Panc1 (cell line): ENCODE measurements at regions of chr2 and their contacts with region 1.

Region 1: DNA sequence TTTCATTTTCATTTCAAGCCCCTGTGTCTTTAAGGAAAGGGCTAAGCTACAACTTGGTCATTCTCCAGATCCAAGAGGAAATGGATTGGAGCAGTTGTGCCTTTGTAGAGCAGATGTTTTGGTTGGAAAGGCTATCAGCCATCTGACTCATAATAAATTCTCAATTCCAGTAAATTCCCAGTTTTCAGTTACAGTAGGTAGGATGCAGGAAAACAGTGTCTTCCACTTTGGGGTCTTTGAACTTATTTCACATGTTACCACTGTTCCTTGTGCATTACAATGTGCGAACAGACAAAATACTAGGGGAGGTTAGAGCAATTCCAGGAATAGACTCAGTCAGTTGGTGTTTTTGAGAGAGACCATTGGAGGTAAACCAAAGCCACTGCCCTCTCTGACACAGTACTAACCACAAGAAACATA is 211.9 kb downstream of the BABAM2 start:
- DNase-seq: no peak
- ATAC-seq: no peak
- H3K4me3 ChIP-seq: no peak overlapping the region
- H3K27ac ChIP-seq: no peak overlapping the region
- H3K4me1 ChIP-seq: no peaks in the 10 kb centered on the region
- H3K27me3 ChIP-seq: no peaks in the 10 kb centered on the region
- CTCF ChIP-seq: no peak

Region 2: DNA sequence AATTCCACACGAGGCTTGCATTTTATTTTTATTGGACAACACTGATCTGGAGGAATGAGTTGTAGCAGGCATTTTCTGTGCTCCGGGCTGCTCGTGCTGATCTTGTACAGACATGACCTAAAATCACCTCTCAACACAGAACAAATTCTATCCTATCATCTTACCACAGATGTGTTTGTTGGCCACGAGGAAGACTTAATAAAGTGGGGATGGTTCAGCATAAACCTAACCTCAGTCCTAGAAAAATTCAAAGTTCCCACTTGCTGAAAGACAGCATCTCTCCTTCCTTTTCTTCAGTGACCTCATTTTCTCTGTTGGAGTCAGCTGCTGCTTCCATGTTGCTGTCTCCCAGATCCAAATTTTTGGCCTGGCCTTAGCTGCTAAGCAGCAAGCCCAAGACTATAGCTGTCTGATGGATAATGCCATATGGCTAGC is 257.6 kb before region 1 on chr2:
- CTCF ChIA-PET with region 1: no interaction called
- POLR2A ChIA-PET with region 1: interaction called, 16 read pairs
- in situ Hi-C with region 1: no loop called
- intact Hi-C with region 1: no loop called
- DNase-seq: no peak
- ATAC-seq: no peak
- H3K4me3 ChIP-seq: no peak overlapping the region
- H3K27ac ChIP-seq: no peak overlapping the region
- H3K4me1 ChIP-seq: no peaks in the 10 kb centered on the region
- H3K27me3 ChIP-seq: no peaks in the 10 kb centered on the region
- CTCF ChIP-seq: no peak

Region 3: GRCh38 chr2:28610583-28611201 is 508.2 kb after region 1 on chr2:
- CTCF ChIA-PET with region 1: no interaction called
- POLR2A ChIA-PET with region 1: no interaction called
- in situ Hi-C with region 1: no loop called
- intact Hi-C with region 1: no loop called
- DNase-seq: no peak
- ATAC-seq: peak; percentile 97
- H3K4me3 ChIP-seq: no peak overlapping the region
- H3K27ac ChIP-seq: peak overlapping the region; percentile 48; the same call in 1 of the 2 replicates
- H3K4me1 ChIP-seq: peaks cover 14% of the 10 kb centered on the region; the same call in 1 of the 2 replicates
- H3K27me3 ChIP-seq: no peaks in the 10 kb centered on the region
- CTCF ChIP-seq: no peak